ENCODE measurements at regions of chr22 and their contacts with region 1.

Region 1: DNA sequence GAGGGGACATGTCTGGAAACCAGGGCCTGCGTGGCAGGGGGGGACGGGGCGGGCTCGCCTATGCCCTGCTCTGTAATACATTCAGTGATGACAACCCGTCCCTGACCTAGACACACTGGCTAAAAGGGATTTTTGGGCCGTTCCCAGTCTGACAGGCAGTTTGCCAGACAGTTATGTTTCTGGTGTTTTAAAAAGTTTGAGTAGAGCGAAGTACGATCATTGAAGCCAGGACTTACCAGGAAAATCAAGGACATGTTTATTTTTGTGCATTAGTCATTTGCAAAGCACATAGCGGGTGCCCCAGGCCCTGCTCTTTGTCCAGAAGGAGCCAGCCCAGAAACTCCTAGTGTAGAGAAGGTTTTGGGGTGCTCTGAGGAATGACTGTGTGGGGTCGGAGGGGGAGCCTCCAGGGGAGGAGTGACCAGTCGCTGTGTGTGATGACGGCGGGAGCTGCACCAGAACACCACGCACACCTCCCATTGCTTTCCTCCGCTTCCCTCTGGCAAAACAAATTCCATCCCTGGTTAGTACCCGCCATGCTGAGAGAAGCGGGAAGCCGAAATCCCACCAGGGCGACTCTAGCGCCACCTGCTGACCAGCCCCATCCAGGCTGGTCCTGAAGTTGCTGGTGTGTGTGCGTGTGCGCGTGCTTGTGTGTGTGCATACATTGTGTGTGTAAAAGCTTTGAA is 50.8 kb downstream of the FBLN1 start:
- DNase-seq: peak; percentile 87 to 94 (median 91)
- H3K4me3 ChIP-seq: no peak overlapping the region
- H3K27ac ChIP-seq: peak overlapping the region; percentile 62 to 84
- H3K4me1 ChIP-seq: peaks cover 42% of the 10 kb centered on the region
- H3K27me3 ChIP-seq: no peaks in the 10 kb centered on the region
- CTCF ChIP-seq: peak; percentile 88 to 99 (median 97)
- EP300 ChIP-seq: no peak
- POLR2A ChIP-seq: peak; percentile 31

Region 2: GRCh38 chr22:45268958-45269844 is 284.3 kb before region 1 on chr22:
- intact Hi-C with region 1: loop called (anchors 2 to 5 kb)
- DNase-seq: peak; percentile 84 to 94 (median 92)
- H3K4me3 ChIP-seq: peak overlapping the region; percentile 53
- H3K27ac ChIP-seq: no peak overlapping the region
- H3K4me1 ChIP-seq: no peaks in the 10 kb centered on the region
- H3K27me3 ChIP-seq: no peaks in the 10 kb centered on the region
- CTCF ChIP-seq: peak; percentile 78 to 92 (median 91)
- EP300 ChIP-seq: no peak
- POLR2A ChIP-seq: no peak

Region 3: DNA sequence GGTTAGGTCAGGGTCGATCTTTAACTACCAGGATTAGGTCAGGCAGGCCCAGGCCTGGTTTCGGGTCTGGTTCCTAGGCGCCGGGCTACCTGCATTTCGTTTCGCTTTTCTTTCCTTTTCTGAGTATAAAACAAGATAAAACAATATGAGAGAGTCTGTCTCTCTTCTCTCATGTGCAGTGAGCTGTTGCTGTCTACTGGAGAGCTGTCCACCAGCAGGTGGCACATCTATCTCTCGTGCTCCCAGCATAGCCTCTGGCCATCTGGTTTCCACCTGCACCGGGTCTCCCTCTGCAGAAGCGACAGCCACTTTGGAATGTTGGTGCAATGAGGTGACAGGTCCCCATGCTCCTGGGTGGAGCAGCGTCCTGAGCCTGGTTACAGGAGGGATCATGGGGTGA is 112.4 kb before region 1 on chr22:
- intact Hi-C with region 1: loop called (anchors 2 to 5 kb)
- DNase-seq: peak; percentile 65 to 80 (median 73)
- H3K4me3 ChIP-seq: no peak overlapping the region
- H3K27ac ChIP-seq: no peak overlapping the region
- H3K4me1 ChIP-seq: no peaks in the 10 kb centered on the region
- H3K27me3 ChIP-seq: no peaks in the 10 kb centered on the region
- CTCF ChIP-seq: peak; percentile 48 to 82 (median 76)
- EP300 ChIP-seq: no peak
- POLR2A ChIP-seq: peak; percentile 29

Region 4: GRCh38 chr22:45450921-45451651 is 102.4 kb before region 1 on chr22:
- intact Hi-C with region 1: loop called in 1 of 4 experiments (anchors 2 kb)
- DNase-seq: peak in 1 of 5 donors; percentile 70
- H3K4me3 ChIP-seq: no peak overlapping the region
- H3K27ac ChIP-seq: peak overlapping the region in 1 of 2 donors; percentile 2
- H3K4me1 ChIP-seq: peaks cover 2% of the 10 kb centered on the region
- H3K27me3 ChIP-seq: no peaks in the 10 kb centered on the region
- CTCF ChIP-seq: peak in 1 of 3 donors; percentile 33
- EP300 ChIP-seq: peak; percentile 87
- POLR2A ChIP-seq: no peak

Region 5: DNA sequence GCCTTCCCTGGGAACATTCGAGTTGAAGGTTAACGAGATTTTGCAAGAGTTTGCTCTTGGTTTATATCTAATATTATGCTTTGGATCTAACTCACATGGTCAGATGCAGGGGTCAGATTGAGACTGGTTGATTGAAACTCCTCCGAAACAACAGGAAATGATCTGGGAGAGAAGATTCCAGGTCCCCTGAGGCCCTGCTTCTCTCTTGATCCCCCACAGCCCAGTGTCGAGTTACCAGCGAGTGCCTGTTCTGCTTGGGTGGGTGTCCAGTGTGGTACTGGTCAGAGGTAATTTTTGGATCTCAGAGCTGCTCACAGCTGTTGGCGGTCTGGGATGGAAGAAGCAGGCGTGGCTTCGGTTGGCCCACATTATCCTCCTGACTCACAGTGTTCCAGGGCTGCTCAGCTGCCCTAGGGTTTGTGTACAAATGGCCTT is 41.6 kb before region 1 on chr22:
- intact Hi-C with region 1: loop called in 2 of 4 experiments (anchors 5 kb)
- DNase-seq: peak; percentile 77 to 89 (median 85)
- H3K4me3 ChIP-seq: no peak overlapping the region
- H3K27ac ChIP-seq: peak overlapping the region; percentile 60 to 67
- H3K4me1 ChIP-seq: peaks cover 22% of the 10 kb centered on the region
- H3K27me3 ChIP-seq: no peaks in the 10 kb centered on the region
- CTCF ChIP-seq: no peak
- EP300 ChIP-seq: no peak
- POLR2A ChIP-seq: no peak